ENCODE measurements at regions of chr1 and their contacts with region 1.

Region 1: GRCh38 chr1:204791453-204792353 is 79.0 kb upstream of the NFASC start:
- DNase-seq: peak; percentile 14
- H3K4me3 ChIP-seq: no peak overlapping the region
- H3K27ac ChIP-seq: no peak overlapping the region
- H3K4me1 ChIP-seq: no peaks in the 10 kb centered on the region
- H3K27me3 ChIP-seq: peaks cover 2% of the 10 kb centered on the region
- CTCF ChIP-seq: peak; percentile 70 to 83

Region 2: DNA sequence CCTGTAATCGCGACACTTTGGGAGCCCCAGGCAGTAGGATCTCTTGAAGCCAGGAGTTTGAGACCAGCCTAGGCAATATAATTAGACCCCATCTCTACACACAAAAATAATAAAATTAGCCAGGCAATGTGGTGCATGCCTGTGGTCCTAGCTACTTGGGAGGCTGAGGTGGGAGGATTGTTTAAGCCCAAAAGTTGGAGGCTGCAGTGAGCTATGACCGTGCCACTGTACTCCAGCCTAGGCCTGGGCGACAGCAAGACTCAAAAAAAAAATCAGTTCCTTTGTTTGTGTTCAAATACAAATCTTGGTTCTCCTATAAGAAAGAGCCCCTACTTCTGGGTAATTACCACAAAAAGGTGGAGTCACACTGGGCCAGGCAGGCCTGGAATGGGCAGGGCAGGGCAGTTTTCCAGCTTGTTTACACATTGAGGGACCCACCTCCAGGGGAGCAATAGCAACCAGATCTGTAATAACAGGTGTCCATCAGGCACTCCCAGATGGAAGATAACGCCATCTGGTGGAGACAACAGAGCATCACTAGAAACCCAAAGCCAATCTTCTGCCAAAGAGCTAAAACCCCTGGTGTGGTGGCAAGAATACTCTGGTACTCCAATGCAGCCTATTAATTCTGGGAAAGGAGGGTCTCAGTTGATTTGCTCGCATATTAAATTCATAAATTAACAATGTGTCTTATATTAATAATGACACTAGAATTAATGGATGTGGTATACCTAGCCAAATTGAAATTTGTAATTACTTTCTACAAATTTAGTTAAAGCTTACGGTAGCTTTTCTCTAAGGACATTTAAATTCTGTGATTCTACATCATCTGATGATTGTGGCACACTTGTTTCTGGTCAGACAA is 393.3 kb before region 1 on chr1:
- CTCF ChIA-PET with region 1: no interaction called
- dilution Hi-C with region 1: no loop called
- in situ Hi-C with region 1: no loop called
- intact Hi-C with region 1: no loop called
- DNase-seq: peak; percentile 75
- H3K4me3 ChIP-seq: no peak overlapping the region
- H3K27ac ChIP-seq: no peak overlapping the region
- H3K4me1 ChIP-seq: no peaks in the 10 kb centered on the region
- H3K27me3 ChIP-seq: no peaks in the 10 kb centered on the region
- CTCF ChIP-seq: peak; percentile 90

Region 3: GRCh38 chr1:204589409-204590038 is 202.2 kb before region 1 on chr1:
- CTCF ChIA-PET with region 1: interaction called, 11 read pairs
- dilution Hi-C with region 1: no loop called
- in situ Hi-C with region 1: no loop called
- intact Hi-C with region 1: no loop called
- DNase-seq: no peak
- H3K4me3 ChIP-seq: no peak overlapping the region
- H3K27ac ChIP-seq: no peak overlapping the region
- H3K4me1 ChIP-seq: peaks cover 15% of the 10 kb centered on the region
- H3K27me3 ChIP-seq: no peaks in the 10 kb centered on the region
- CTCF ChIP-seq: no peak

Region 4: GRCh38 chr1:204885288-204885711 is 93.6 kb after region 1 on chr1:
- CTCF ChIA-PET with region 1: no interaction called
- dilution Hi-C with region 1: no loop called
- in situ Hi-C with region 1: no loop called
- intact Hi-C with region 1: no loop called
- DNase-seq: peak; percentile 72
- H3K4me3 ChIP-seq: peak overlapping the region; percentile 14 to 34 (median 28)
- H3K27ac ChIP-seq: peak overlapping the region; percentile 50
- H3K4me1 ChIP-seq: peaks cover 14% of the 10 kb centered on the region
- H3K27me3 ChIP-seq: no peaks in the 10 kb centered on the region
- CTCF ChIP-seq: no peak

Region 5: GRCh38 chr1:204945565-204945977 is 153.9 kb after region 1 on chr1:
- CTCF ChIA-PET with region 1: no interaction called
- dilution Hi-C with region 1: no loop called
- in situ Hi-C with region 1: no loop called
- intact Hi-C with region 1: no loop called
- DNase-seq: no peak
- H3K4me3 ChIP-seq: no peak overlapping the region
- H3K27ac ChIP-seq: no peak overlapping the region
- H3K4me1 ChIP-seq: peaks cover 6% of the 10 kb centered on the region
- H3K27me3 ChIP-seq: no peaks in the 10 kb centered on the region
- CTCF ChIP-seq: no peak

Measured in mammary epithelial cell (primary cell).